ENCODE measurements at regions of chr1 and their contacts with region 1.

Region 1: GRCh38 chr1:172742599-172743500 is 83.9 kb downstream of the FASLG start:
- DNase-seq: no peak
- ATAC-seq: peak in 1 of 2 donors; percentile 40
- H3K4me3 ChIP-seq: no peak overlapping the region
- H3K27ac ChIP-seq: no peak overlapping the region
- H3K4me1 ChIP-seq: peaks cover 27% of the 10 kb centered on the region
- H3K27me3 ChIP-seq: no peaks in the 10 kb centered on the region
- CTCF ChIP-seq: peak; percentile 73

Region 2: GRCh38 chr1:173205146-173206051 is 462.5 kb after region 1 on chr1:
- intact Hi-C with region 1: loop called (anchors 5 kb)
- DNase-seq: no peak
- ATAC-seq: peak; percentile 38 to 61
- H3K4me3 ChIP-seq: no peak overlapping the region
- H3K27ac ChIP-seq: no peak overlapping the region
- H3K4me1 ChIP-seq: peaks cover 28% of the 10 kb centered on the region
- H3K27me3 ChIP-seq: no peaks in the 10 kb centered on the region
- CTCF ChIP-seq: no peak